ENCODE measurements at regions of chr16 and their contacts with region 1.

Region 1: GRCh38 chr16:22240023-22240710 is 34.1 kb downstream of the EEF2K start:
- DNase-seq: no peak
- ATAC-seq: peak in 2 of 4 donors; percentile 21 to 44
- H3K4me3 ChIP-seq: no peak overlapping the region
- H3K27ac ChIP-seq: peak overlapping the region; percentile 41
- H3K4me1 ChIP-seq: peaks cover 17% of the 10 kb centered on the region
- H3K27me3 ChIP-seq: no peaks in the 10 kb centered on the region
- CTCF ChIP-seq: no peak

Region 2: DNA sequence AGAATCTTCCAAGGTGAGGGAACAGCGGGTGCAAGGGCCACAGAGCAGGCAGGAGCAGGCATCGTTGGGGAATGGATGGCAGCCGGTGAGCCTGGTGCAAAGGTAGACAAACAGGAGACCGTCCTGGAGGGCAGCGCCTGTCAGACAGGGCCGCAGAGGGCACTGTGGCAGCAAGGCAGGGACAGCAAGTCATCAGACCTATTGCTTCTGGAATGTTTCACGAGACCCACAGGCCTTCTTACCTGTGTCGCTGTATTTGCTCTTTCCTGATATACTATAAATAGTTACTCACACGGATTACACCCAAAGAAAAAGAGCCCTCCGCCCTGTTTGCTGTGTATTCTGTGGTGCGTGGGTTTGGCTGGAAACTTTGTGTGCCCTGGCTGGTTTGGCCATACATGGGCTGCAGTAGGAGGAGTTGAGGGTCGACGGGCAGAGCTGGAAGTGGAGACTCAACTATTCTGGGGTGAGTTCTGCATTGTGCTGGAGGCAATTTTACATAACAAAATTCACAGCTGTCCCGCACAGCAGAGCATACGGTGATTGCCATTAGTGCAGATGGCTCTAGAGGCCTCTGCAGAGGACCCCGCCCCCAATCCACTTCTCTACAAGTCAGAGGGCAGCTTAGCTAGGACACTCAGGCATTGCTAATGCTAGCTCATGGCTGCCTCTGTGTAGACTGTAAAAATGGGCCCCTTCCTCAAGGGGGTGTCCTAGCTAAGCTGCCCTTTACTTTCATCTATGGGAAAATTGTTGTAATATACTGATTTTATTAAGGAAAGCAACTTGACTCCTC is 38.5 kb after region 1 on chr16:
- intact Hi-C with region 1: loop called in 1 of 2 experiments (anchors 5 kb)
- DNase-seq: peak in 1 of 2 donors; percentile 8
- ATAC-seq: peak in 1 of 4 donors; percentile 36
- H3K4me3 ChIP-seq: no peak overlapping the region
- H3K27ac ChIP-seq: no peak overlapping the region
- H3K4me1 ChIP-seq: no peaks in the 10 kb centered on the region
- H3K27me3 ChIP-seq: no peaks in the 10 kb centered on the region
- CTCF ChIP-seq: no peak